Activated B cell treated with CpG ODN at 0.5 μM for 24 hours (primary cell): ENCODE measurements at regions of chr1 and their contacts with region 1.

Region 1: GRCh38 chr1:40825435-40825788 is 36.8 kb downstream of the CITED4 start:
- DNase-seq: no peak
- ATAC-seq: peak; percentile 50
- H3K4me3 Mint-ChIP-seq: no peak overlapping the region
- H3K27ac Mint-ChIP-seq: no peak overlapping the region
- H3K4me1 Mint-ChIP-seq: peaks cover 17% of the 10 kb centered on the region
- H3K27me3 Mint-ChIP-seq: no peaks in the 10 kb centered on the region
- CTCF ChIP-seq: no peak

Region 2: GRCh38 chr1:40840526-40841323 is 15.3 kb after region 1 on chr1:
- CTCF ChIA-PET with region 1: no interaction called
- POLR2A ChIA-PET with region 1: no interaction called
- intact Hi-C with region 1: loop called (anchors 2 kb)
- DNase-seq: no peak
- ATAC-seq: no peak
- H3K4me3 Mint-ChIP-seq: no peak overlapping the region
- H3K27ac Mint-ChIP-seq: no peak overlapping the region
- H3K4me1 Mint-ChIP-seq: peaks cover 8% of the 10 kb centered on the region
- H3K27me3 Mint-ChIP-seq: peaks cover 13% of the 10 kb centered on the region
- CTCF ChIP-seq: no peak

Region 3: DNA sequence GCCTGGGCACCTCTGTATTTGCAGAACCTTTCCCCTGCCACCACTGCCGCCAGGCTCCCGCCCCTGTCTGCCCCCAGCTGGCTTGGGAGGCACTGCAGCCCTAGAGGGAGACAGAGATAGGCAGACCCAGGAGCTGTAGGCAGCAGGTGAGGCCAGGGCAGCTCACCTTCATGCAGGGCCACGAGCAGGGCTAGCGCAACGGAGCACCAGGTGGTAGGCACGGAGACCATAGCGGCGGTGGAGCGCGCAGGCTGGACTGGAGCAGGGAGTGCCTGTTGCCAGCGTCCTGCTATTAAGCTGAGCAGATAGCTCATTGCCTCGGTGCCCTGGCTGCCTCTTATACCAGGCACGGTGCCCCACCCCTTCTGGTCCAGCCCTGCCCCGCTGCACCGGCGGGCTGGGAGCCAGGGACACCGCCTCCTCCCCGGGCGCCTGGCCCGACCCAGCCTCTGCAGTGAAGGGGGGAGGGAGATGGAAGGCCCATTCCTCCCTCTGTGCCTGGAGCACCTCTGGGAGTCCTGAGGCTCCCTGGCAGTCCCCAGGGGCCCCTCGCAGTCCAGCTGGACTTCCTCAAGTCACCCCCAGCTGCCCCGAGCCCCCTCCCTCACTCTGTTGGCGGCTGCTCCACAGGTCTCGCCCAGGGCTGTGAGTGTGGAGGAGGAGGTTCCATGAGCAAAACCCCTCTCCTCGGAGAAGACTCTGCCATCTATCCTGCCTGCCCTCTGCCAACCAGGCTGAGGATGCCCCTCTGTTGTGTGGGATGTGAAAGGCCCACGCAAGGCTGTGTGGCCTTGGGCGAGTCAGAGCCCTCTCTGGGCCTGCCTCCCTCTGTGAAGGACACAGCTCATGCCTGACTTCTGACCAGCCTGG is 659.2 kb after region 1 on chr1 and contains the start of gene EDN2:
- CTCF ChIA-PET with region 1: no interaction called
- POLR2A ChIA-PET with region 1: no interaction called
- intact Hi-C with region 1: no loop called
- DNase-seq: no peak
- ATAC-seq: no peak
- H3K4me3 Mint-ChIP-seq: no peak within 1 kb of the TSS
- H3K27ac Mint-ChIP-seq: no peak within 1 kb of the TSS
- H3K4me1 Mint-ChIP-seq: peaks cover 15% of the 10 kb centered on the region
- H3K27me3 Mint-ChIP-seq: peaks cover 24% of the 10 kb centered on the region
- CTCF ChIP-seq: no peak
- total RNA-seq, gene EDN2: not detected in 2 replicates